Activated CD8-positive, alpha-beta memory T cell treated with anti-CD3 and anti-CD28 coated beads, Interleukin-2, amount 10 ng/mL, durations not matched to agents 7 days and 5 days (primary cell): ENCODE measurements at regions of chr17 and their contacts with region 1.

Region 1: GRCh38 chr17:75228305-75228704 is 22.8 kb downstream of the NUP85 start:
- DNase-seq: no peak
- ATAC-seq: no peak
- H3K4me3 Mint-ChIP-seq: no peak overlapping the region
- H3K27ac Mint-ChIP-seq: no peak overlapping the region
- H3K4me1 Mint-ChIP-seq: no peaks in the 10 kb centered on the region
- H3K27me3 Mint-ChIP-seq: no peaks in the 10 kb centered on the region

Region 2: DNA sequence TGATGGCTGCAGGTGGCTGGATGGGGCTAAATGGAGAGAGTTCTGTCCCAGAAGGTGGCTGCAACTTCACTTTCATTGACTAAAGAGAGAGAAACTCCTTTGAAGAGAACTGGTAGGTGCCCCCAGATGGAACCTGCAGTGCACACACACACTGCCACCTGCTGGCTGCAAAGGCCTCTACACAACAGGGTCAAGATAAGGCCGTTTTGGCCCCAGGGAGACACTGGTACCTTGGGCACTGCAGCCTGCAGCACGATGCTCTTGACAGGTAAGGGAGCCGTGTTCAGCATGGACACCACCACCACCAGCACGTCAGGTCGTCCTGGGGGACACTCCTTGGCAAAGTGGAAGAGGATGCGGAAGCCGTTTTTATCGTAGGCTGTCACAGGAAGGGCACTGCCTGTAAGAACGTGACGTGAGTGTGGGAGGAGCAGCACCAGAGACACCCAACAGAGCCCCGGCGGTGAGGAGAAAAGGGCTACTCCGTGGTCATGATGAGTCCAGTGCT is 10.4 kb after region 1 on chr17:
- CTCF ChIA-PET with region 1: interaction called, 23 read pairs
- DNase-seq: peak; percentile 72
- ATAC-seq: peak; percentile 74
- H3K4me3 Mint-ChIP-seq: no peak overlapping the region
- H3K27ac Mint-ChIP-seq: peak overlapping the region; percentile 70
- H3K4me1 Mint-ChIP-seq: peaks cover 32% of the 10 kb centered on the region
- H3K27me3 Mint-ChIP-seq: no peaks in the 10 kb centered on the region